B cell (primary cell): ENCODE measurements at regions of chr9 and their contacts with region 1.

Region 1: DNA sequence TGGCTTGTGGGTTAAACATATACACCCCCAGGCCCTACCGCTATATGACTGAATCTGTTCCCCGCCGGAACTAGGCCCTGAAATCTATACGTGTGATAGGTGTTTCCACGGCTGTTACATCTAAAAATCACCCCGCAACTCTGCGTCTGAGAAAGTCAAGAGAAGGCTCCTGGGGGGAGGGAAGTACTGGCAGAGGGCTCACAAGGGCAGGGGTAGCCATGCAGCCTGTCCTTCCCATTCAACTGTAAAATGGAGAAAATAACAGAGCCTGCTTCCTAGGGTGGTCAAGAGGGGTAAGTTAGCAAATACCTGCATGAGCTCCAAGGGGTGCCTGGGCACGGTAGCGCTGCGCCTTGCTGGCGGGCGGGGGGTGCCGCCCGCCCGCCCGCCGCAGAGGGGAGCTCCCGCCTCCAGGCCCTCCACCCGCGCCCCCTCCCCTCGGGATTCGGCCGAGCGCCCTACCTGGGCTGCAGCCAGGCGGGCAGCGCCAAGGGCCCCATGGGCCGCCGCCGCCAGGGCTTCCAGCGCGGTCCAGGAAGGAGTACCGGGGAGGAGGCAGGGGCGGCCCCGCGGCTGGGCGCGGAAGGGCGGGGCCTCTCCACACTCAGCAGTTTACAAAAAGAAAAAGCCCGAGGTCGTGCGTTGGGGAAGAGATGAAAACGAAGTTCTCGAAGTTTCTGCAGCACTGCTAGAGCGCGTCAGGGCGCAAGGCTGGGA is at the start of gene HACD4:
- DNase-seq: peak; percentile 61
- ATAC-seq: peak; percentile 83
- H3K4me3 ChIP-seq: peak within 1 kb of the TSS; percentile 56 to 79 (median 64)
- H3K4me3 Mint-ChIP-seq: peak within 1 kb of the TSS; percentile 82
- H3K27ac ChIP-seq: peak within 1 kb of the TSS; percentile 79 to 85
- H3K27ac Mint-ChIP-seq: peak within 1 kb of the TSS; percentile 79
- H3K4me1 ChIP-seq: peaks cover 11 to 13% of the 10 kb centered on the region in 2 donors
- H3K4me1 Mint-ChIP-seq: peaks cover 6% of the 10 kb centered on the region
- H3K27me3 ChIP-seq: no peaks in the 10 kb centered on the region
- H3K27me3 Mint-ChIP-seq: no peaks in the 10 kb centered on the region
- CTCF ChIP-seq: no peak
- total RNA-seq, gene HACD4: 3.9 and 5.7 TPM in 2 replicates

Region 2: DNA sequence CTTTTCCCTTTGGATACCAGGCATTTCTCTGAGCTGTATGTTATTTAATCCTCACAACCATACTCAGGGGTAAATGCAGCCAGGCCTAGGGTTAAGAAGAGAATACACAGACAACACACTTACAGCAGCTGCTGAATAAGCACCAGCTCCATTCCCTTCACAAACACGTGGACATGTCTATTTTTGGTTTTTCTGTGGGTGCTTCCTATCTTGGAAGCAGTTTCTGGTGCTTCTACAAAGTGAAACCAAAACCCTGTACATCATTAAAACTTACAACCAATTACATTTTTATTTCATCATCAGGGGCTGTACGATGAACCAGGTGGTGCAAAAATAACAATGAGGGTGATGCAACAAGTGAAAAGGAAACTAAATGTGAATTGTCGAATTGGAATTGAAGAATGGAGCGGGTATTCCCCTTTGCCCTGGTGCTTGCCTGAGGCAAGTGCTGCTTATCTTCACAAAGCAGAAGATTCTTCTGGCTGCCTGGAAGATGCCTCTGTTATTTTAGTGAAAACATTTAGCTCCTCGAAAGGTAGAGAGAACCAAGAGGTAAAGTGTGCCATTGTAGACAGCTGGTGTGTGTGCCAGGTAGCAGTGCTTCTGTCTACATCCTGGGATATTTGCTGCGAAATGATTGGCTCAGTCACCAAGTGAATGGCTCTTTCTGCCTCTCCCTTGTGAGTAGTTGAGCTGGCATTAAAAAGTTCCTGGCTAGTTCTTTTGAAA is 65.1 kb after region 1 on chr9:
- CTCF ChIA-PET with region 1: no interaction called
- POLR2A ChIA-PET with region 1: interaction called, 3 read pairs
- intact Hi-C with region 1: loop called (anchors 10 kb)
- DNase-seq: peak; percentile 60
- ATAC-seq: peak; percentile 39
- H3K4me3 ChIP-seq: peak overlapping the region in 1 of 5 experiments; percentile 17
- H3K4me3 Mint-ChIP-seq: peak overlapping the region; percentile 50
- H3K27ac ChIP-seq: peak overlapping the region in 1 of 2 donors; percentile 57
- H3K27ac Mint-ChIP-seq: no peak overlapping the region
- H3K4me1 ChIP-seq: peaks cover 20 to 23% of the 10 kb centered on the region in 2 donors
- H3K4me1 Mint-ChIP-seq: peaks cover 35% of the 10 kb centered on the region
- H3K27me3 ChIP-seq: no peaks in the 10 kb centered on the region
- H3K27me3 Mint-ChIP-seq: no peaks in the 10 kb centered on the region
- CTCF ChIP-seq: no peak